K562 (cell line): ENCODE measurements at regions of chr5 and their contacts with region 1.

Region 1: GRCh38 chr5:149434162-149435014 is 55.3 kb upstream of the IL17B start:
- DNase-seq: peak; percentile 76 to 84 (median 81)
- ATAC-seq: peak; percentile 32; the same call in 2 of the 3 replicates
- H3K4me3 ChIP-seq: no peak overlapping the region
- H3K27ac ChIP-seq: no peak overlapping the region
- H3K4me1 ChIP-seq: peaks cover 8 to 27% of the 10 kb centered on the region in 2 experiments
- H3K27me3 ChIP-seq: no peaks in the 10 kb centered on the region
- CTCF ChIP-seq: peak; percentile 81 to 93 (median 91)
- EP300 ChIP-seq: no peak
- POLR2A ChIP-seq: no peak
- RAD21 ChIP-seq: peak; percentile 76 to 84

Region 2: DNA sequence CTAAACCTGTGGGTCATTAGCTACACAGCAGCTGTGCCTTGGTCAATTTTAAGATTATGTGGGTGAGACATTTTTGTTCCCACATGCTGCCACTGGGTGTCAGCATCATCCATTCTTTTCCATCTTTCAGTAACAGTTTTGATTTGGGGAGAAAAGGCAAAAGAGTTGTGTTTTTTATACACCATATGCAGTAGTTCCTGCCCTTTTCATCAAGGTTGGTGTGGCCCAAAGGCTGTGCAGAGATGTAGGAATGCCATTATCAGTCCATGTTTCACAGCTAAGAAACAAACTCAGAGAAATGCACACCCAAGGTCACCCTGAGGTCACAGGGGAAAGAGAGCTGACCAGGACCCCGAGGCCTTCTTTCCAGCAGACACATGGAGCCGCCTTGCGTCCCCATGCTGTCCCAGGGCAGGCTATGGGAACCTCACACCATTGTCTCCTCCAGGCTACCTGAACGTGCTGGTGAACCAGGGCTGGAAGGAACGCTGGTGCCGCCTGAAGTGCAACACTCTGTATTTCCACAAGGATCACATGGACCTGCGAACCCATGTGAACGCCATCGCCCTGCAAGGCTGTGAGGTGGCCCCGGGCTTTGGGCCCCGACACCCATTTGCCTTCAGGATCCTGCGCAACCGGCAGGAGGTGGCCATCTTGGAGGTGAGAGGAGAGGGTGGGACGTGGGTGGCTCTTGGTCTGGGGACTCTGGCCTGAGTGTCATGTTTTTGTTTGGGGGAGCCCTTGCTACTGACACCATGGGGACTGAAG is 116.9 kb before region 1 on chr5:
- CTCF ChIA-PET with region 1: interaction called, 10 read pairs
- POLR2A ChIA-PET with region 1: no interaction called
- in situ Hi-C with region 1: no loop called
- intact Hi-C with region 1: loop called (anchors 1 kb)
- DNase-seq: peak; percentile 61 to 73 (median 68)
- ATAC-seq: peak; percentile 46
- H3K4me3 ChIP-seq: no peak overlapping the region
- H3K27ac ChIP-seq: no peak overlapping the region; the same call in 2 of the 3 replicates
- H3K4me1 ChIP-seq: peaks cover 27 to 28% of the 10 kb centered on the region in 2 experiments
- H3K27me3 ChIP-seq: peaks cover 5% of the 10 kb centered on the region in 2 experiments
- CTCF ChIP-seq: peak; percentile 64 to 92 (median 79); a peak in 5 of 6 replicates
- EP300 ChIP-seq: no peak
- POLR2A ChIP-seq: no peak
- RAD21 ChIP-seq: peak; percentile 83 to 93

Region 3: GRCh38 chr5:149381987-149382340 is 52.4 kb before region 1 on chr5:
- CTCF ChIA-PET with region 1: interaction called, 20 read pairs
- POLR2A ChIA-PET with region 1: interaction called, 3 read pairs
- in situ Hi-C with region 1: loop called (anchors 5 kb)
- intact Hi-C with region 1: loop called (anchors 1 kb)
- DNase-seq: peak; percentile 81 to 85 (median 84)
- ATAC-seq: peak; percentile 97
- H3K4me3 ChIP-seq: no peak overlapping the region
- H3K27ac ChIP-seq: no peak overlapping the region
- H3K4me1 ChIP-seq: peaks cover 3 to 25% of the 10 kb centered on the region in 2 experiments; a peak in 3 of 5 replicates
- H3K27me3 ChIP-seq: no peaks in the 10 kb centered on the region
- CTCF ChIP-seq: peak; percentile 91 to 95 (median 92)
- EP300 ChIP-seq: no peak
- POLR2A ChIP-seq: no peak
- RAD21 ChIP-seq: peak; percentile 88 to 95

Region 4: GRCh38 chr5:149387081-149387631 is 47.2 kb before region 1 on chr5:
- CTCF ChIA-PET with region 1: interaction called, 20 read pairs
- POLR2A ChIA-PET with region 1: interaction called, 3 read pairs
- in situ Hi-C with region 1: loop called (anchors 5 kb)
- intact Hi-C with region 1: loop called (anchors 1 kb)
- DNase-seq: no peak
- ATAC-seq: no peak
- H3K4me3 ChIP-seq: no peak overlapping the region
- H3K27ac ChIP-seq: no peak overlapping the region
- H3K4me1 ChIP-seq: peaks cover 3 to 10% of the 10 kb centered on the region in 2 experiments; a peak in 3 of 5 replicates
- H3K27me3 ChIP-seq: no peaks in the 10 kb centered on the region
- CTCF ChIP-seq: no peak
- EP300 ChIP-seq: no peak
- POLR2A ChIP-seq: no peak
- RAD21 ChIP-seq: no peak